CD8-positive, alpha-beta T cell (primary cell): ENCODE measurements at regions of chrX and their contacts with region 1.

Region 1: GRCh38 chrX:107672955-107673378 is 44.7 kb downstream of the PRPS1 start:
- DNase-seq: peak; percentile 60 to 94 (median 84)
- ATAC-seq: peak; percentile 59
- H3K4me3 ChIP-seq: peak overlapping the region; percentile 10 to 13
- H3K4me3 Mint-ChIP-seq: peak overlapping the region; percentile 67
- H3K27ac ChIP-seq: peak overlapping the region; percentile 97 to 98
- H3K27ac Mint-ChIP-seq: peak overlapping the region; percentile 99
- H3K4me1 ChIP-seq: peaks cover 41% of the 10 kb centered on the region
- H3K4me1 Mint-ChIP-seq: peaks cover 47% of the 10 kb centered on the region
- H3K27me3 ChIP-seq: no peaks in the 10 kb centered on the region
- H3K27me3 Mint-ChIP-seq: no peaks in the 10 kb centered on the region
- CTCF ChIP-seq: peak; percentile 52

Region 2: DNA sequence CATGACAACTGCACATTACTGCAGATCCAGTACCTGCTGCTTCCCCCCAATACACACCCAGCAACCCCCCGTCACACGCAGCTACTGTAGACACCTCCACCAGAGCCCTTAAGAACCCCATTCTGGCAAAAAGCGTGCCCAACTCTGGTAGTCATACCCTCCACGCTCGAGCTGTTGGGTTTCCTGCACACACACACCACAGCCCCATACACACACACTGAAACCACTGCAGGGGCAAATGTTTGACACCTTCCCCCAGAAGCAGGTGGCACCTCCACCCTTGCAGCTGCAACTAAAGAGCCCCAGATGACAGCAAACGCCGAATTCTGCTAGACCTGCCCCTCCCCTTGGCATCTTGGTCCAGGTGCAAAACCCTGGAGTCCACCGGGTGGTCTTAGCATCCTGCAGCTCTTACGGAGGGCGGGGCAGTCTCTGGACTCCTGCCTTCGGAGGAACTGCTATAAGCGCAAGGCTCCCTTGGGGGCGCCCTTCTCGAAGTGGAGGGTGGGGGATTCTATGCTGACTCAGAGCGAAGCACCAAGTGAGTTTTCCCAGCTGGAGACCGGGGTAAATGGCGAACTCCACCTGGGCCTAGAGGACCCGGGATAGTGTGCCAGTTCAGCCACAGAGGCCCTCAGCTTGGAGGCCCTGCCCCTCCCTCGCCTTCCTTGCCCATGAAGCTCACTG is 222.0 kb before region 1 on chrX:
- CTCF ChIA-PET with region 1: no interaction called
- POLR2A ChIA-PET with region 1: no interaction called
- intact Hi-C with region 1: loop called in 1 of 2 experiments (anchors 2 kb)
- DNase-seq: peak in 6 of 9 experiments; percentile 11 to 81 (median 54)
- ATAC-seq: peak; percentile 57
- H3K4me3 ChIP-seq: peak overlapping the region; percentile 23 to 46
- H3K4me3 Mint-ChIP-seq: peak overlapping the region; percentile 78
- H3K27ac ChIP-seq: peak overlapping the region in 1 of 2 experiments; percentile 73
- H3K27ac Mint-ChIP-seq: peak overlapping the region; percentile 75
- H3K4me1 ChIP-seq: no peaks in the 10 kb centered on the region
- H3K4me1 Mint-ChIP-seq: peaks cover 18% of the 10 kb centered on the region
- H3K27me3 ChIP-seq: no peaks in the 10 kb centered on the region
- H3K27me3 Mint-ChIP-seq: peaks cover 26% of the 10 kb centered on the region
- CTCF ChIP-seq: no peak

Region 3: DNA sequence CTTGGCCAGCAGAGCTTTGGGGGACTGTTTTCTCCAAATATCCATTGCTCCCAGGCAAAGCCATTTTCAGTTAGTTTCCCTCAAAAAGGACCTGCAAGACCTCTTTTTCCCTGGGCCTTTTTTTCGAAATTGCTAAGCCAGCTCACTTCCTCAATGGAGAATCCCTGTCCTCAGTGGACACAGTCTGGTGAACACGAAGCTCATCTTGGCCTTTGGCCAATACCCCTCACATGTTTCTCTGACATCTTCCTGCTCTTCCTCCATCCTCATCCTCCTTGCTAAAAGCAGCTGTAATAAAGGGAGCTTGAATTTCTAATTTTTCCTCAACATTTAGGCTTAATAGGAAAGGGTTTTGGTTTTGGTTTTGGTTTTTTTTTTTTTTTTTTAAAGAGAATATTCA is 62.3 kb before region 1 on chrX:
- CTCF ChIA-PET with region 1: no interaction called
- POLR2A ChIA-PET with region 1: no interaction called
- intact Hi-C with region 1: no loop called
- DNase-seq: no peak
- ATAC-seq: no peak
- H3K4me3 ChIP-seq: no peak overlapping the region
- H3K4me3 Mint-ChIP-seq: no peak overlapping the region
- H3K27ac ChIP-seq: no peak overlapping the region
- H3K27ac Mint-ChIP-seq: no peak overlapping the region
- H3K4me1 ChIP-seq: no peaks in the 10 kb centered on the region
- H3K4me1 Mint-ChIP-seq: no peaks in the 10 kb centered on the region
- H3K27me3 ChIP-seq: no peaks in the 10 kb centered on the region
- H3K27me3 Mint-ChIP-seq: peaks cover 2% of the 10 kb centered on the region
- CTCF ChIP-seq: no peak

Region 4: DNA sequence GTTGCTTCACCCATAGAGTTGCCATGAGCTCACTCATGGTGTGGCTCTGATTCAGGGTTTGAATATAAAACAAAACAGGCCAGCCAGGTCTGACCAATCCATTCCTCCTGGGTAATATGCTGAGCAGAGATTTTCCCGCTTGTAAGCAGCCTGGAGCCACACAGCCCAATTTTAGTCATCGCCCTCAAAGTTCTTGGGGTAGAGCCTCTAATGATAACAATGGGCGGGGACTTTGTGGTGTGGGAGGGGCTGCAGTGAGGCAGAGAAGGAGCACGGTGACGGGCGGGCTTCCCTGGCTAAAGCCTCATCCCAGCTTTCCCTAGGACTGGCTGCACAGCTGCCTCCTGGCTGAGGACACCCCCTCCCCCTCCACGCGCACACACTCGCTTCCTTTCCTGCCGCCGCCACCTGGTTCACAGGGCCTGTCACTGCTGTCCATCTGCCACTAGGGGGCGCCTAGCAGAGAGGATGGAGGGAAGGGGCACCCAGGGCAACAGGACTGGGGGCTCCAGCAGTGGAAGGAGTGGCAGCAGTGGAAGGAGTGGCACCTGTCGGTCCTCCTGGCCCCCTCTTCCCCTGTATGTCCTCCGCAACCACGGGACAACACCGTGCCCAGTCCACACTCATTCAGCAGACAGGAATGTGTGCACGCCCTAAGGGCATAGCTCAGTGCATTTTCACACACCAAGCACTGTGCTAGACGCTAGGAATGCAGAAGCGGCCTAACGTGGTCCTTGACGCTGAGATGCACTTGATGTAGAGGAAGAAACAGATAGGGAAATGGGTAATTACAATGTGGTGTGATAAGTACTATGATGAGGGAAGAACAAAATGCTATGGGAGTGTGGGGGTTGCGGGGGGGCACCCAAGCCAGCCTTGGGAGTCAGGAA is 17.9 kb before region 1 on chrX:
- CTCF ChIA-PET with region 1: interaction called, 48 read pairs
- POLR2A ChIA-PET with region 1: interaction called, 3 read pairs
- intact Hi-C with region 1: no loop called
- DNase-seq: peak in 8 of 9 experiments; percentile 46 to 81 (median 69)
- ATAC-seq: peak; percentile 87
- H3K4me3 ChIP-seq: no peak overlapping the region
- H3K4me3 Mint-ChIP-seq: no peak overlapping the region
- H3K27ac ChIP-seq: no peak overlapping the region
- H3K27ac Mint-ChIP-seq: peak overlapping the region; percentile 57
- H3K4me1 ChIP-seq: peaks cover 11% of the 10 kb centered on the region
- H3K4me1 Mint-ChIP-seq: peaks cover 18% of the 10 kb centered on the region
- H3K27me3 ChIP-seq: peaks cover 0 to 2% of the 10 kb centered on the region in 2 experiments
- H3K27me3 Mint-ChIP-seq: no peaks in the 10 kb centered on the region
- CTCF ChIP-seq: peak; percentile 55

Region 5: DNA sequence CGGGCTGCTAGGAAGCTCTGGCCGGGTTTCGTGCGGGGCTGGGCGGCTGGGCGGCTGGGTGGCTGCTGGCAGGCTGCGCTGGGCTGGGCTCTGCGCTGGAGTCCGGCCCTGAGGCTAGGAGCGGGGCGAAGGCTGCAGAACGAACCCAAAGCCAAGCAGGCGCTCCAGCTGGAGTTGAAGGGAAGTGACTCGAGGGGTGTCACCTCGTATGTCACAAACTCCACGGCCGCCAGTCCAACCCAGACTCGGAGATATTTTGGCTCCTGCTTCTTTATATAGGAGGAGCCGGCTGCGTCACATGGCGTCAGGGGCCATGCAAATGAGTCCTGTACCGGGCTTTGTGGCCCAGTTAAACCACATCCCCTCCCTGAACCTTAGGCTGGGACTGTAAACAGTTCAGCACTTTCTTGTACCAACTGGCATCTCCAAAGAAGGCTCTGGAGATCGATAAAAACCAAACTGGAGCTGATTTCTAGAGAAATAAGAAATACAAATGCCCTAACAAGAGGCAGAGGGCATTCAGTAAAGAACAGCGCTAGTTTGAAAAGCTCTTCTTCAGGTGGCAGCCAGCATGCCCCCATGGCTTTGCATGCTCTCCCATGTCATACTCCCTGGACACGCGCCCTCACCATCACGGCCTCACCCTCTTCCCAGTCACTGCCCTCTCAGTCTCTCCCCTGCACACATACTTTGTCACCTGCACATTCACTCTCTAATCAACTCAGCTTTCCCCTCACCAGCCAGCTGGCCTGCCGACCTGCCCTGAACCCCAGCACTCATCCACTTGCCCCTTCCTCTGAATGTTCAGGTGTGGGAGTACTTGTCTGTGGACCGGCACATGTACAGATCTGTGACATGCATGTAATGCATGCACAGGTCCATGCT is 44.1 kb after region 1 on chrX:
- CTCF ChIA-PET with region 1: interaction called, 278 read pairs
- POLR2A ChIA-PET with region 1: interaction called, 270 read pairs
- intact Hi-C with region 1: loop called (anchors 1 kb)
- DNase-seq: peak; percentile 78 to 94 (median 90)
- ATAC-seq: peak; percentile 66
- H3K4me3 ChIP-seq: peak overlapping the region; percentile 78 to 91
- H3K4me3 Mint-ChIP-seq: peak overlapping the region; percentile 93
- H3K27ac ChIP-seq: peak overlapping the region; percentile 100
- H3K27ac Mint-ChIP-seq: peak overlapping the region; percentile 99
- H3K4me1 ChIP-seq: peaks cover 42% of the 10 kb centered on the region
- H3K4me1 Mint-ChIP-seq: peaks cover 48% of the 10 kb centered on the region
- H3K27me3 ChIP-seq: no peaks in the 10 kb centered on the region
- H3K27me3 Mint-ChIP-seq: no peaks in the 10 kb centered on the region
- CTCF ChIP-seq: no peak

Region 6: DNA sequence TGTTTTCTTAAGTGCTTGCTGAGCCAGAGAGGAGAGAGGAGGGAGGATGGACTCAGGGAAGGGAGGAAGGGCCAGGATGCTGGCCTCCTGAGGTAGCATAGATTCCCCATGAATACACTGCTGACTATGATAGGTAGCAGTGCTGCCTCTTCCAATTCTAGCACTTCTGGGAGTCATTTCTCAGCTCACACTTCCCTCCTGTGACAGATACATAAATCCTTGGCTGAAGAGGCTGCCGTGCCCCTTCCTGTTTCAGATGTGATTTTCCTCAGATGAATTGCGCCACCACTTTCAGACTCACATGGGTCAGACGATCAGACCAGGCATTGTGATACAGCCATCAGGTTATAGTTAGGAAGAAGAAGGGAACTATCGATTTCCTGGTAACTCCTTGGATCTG is 80.2 kb after region 1 on chrX:
- CTCF ChIA-PET with region 1: interaction called, 11 read pairs
- POLR2A ChIA-PET with region 1: no interaction called
- intact Hi-C with region 1: no loop called
- DNase-seq: no peak
- ATAC-seq: no peak
- H3K4me3 ChIP-seq: no peak overlapping the region
- H3K4me3 Mint-ChIP-seq: no peak overlapping the region
- H3K27ac ChIP-seq: no peak overlapping the region
- H3K27ac Mint-ChIP-seq: no peak overlapping the region
- H3K4me1 ChIP-seq: no peaks in the 10 kb centered on the region
- H3K4me1 Mint-ChIP-seq: peaks cover 15% of the 10 kb centered on the region
- H3K27me3 ChIP-seq: no peaks in the 10 kb centered on the region
- H3K27me3 Mint-ChIP-seq: no peaks in the 10 kb centered on the region
- CTCF ChIP-seq: no peak

Region 7: DNA sequence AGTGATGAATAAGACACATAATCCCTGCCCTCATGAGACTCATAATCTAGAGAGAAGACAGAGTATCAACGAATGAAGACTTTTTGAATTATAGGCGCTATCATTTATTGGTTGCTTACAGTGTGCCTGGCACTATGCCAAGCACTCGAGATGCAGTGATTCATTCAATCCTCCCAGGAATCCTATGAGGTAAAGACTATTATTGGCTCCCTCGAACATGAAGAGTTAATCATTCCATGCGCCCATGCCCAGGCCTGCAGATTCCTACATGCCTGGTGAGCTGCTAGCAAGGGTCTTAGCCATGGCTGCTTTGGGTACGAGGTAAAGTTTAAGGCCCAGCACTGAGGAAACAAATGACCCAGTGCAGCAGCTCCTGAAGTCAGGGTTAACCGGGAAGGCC is 262.2 kb after region 1 on chrX:
- CTCF ChIA-PET with region 1: no interaction called
- POLR2A ChIA-PET with region 1: no interaction called
- intact Hi-C with region 1: no loop called
- DNase-seq: no peak
- ATAC-seq: no peak
- H3K4me3 ChIP-seq: no peak overlapping the region
- H3K4me3 Mint-ChIP-seq: no peak overlapping the region
- H3K27ac ChIP-seq: no peak overlapping the region
- H3K27ac Mint-ChIP-seq: no peak overlapping the region
- H3K4me1 ChIP-seq: no peaks in the 10 kb centered on the region
- H3K4me1 Mint-ChIP-seq: peaks cover 3% of the 10 kb centered on the region
- H3K27me3 ChIP-seq: no peaks in the 10 kb centered on the region
- H3K27me3 Mint-ChIP-seq: peaks cover 17% of the 10 kb centered on the region
- CTCF ChIP-seq: no peak